ENCODE measurements at regions of chr3 and their contacts with region 1.

Region 1: DNA sequence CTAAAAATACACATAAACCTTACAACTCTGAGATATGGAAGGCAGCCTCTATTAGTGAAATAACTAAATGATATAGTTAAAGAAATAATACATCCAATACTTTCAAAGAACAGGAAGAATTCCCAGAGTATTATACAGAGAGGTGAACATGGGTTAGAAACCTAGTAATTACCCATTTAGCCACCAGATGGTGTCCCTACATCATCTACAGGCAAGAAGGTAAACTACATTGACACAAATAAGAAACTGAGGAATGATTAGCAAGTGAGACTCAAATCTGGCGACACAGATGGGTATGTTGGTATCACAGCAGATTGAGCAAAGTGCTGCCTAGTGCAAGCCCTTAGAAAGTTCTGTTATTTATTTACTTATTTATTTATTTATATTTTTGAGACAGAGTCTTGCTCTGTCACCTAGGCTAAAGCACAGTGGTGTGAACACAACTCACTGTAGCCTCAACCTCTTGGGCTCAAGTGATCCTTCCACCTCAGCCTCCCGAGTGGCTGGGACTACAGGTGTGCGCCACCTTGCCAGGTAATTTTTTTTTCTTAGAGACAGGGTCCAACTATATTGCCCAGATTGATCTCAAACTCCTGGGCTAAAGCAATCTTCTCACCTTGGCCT is 28.2 kb downstream of the NEK4 start:
- DNase-seq: no peak
- H3K4me3 Mint-ChIP-seq: no peak overlapping the region
- H3K27ac Mint-ChIP-seq: no peak overlapping the region
- H3K4me1 Mint-ChIP-seq: no peaks in the 10 kb centered on the region
- H3K27me3 Mint-ChIP-seq: no peaks in the 10 kb centered on the region

Region 2: DNA sequence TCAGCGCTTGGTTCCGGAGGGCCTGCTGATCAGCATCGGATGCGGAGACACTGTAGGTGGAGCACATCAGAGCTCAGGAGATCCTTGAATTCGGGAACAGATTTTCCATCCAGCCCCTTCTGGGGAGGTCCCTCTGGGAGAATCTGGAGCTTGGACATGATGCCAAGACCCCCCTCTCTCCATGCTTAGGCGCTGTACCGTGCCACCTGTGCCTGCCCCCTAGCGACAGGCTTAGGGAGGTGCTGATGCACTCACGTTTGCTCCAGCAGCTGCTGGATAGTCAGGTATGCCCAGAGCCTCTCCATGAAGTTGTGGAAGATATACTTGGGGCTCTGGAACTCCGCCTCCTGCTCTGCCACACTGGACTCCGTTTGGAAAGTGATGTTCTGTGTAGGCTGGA is 78.2 kb after region 1 on chr3:
- CTCF ChIA-PET with region 1: interaction called, 5 read pairs
- intact Hi-C with region 1: loop called (anchors 1 kb)
- DNase-seq: peak; percentile 50
- H3K4me3 Mint-ChIP-seq: no peak overlapping the region
- H3K27ac Mint-ChIP-seq: no peak overlapping the region
- H3K4me1 Mint-ChIP-seq: no peaks in the 10 kb centered on the region
- H3K27me3 Mint-ChIP-seq: no peaks in the 10 kb centered on the region

Region 3: GRCh38 chr3:52934630-52935530 is 192.3 kb after region 1 on chr3:
- CTCF ChIA-PET with region 1: no interaction called
- intact Hi-C with region 1: loop called (anchors 1 kb)
- DNase-seq: peak; percentile 76
- H3K4me3 Mint-ChIP-seq: no peak overlapping the region
- H3K27ac Mint-ChIP-seq: no peak overlapping the region
- H3K4me1 Mint-ChIP-seq: peaks cover 10% of the 10 kb centered on the region
- H3K27me3 Mint-ChIP-seq: no peaks in the 10 kb centered on the region

Region 4: GRCh38 chr3:53195602-53196574 is 453.4 kb after region 1 on chr3:
- CTCF ChIA-PET with region 1: no interaction called
- intact Hi-C with region 1: loop called (anchors 2 kb)
- DNase-seq: peak; percentile 59
- H3K4me3 Mint-ChIP-seq: no peak overlapping the region
- H3K27ac Mint-ChIP-seq: no peak overlapping the region
- H3K4me1 Mint-ChIP-seq: peaks cover 3% of the 10 kb centered on the region
- H3K27me3 Mint-ChIP-seq: no peaks in the 10 kb centered on the region